ENCODE measurements at regions of chr5 and their contacts with region 1.

Region 1: GRCh38 chr5:67493676-67494075 is 297.1 kb upstream of the CD180 start:
- DNase-seq: peak in 1 of 5 donors; percentile 14
- H3K4me3 ChIP-seq: no peak overlapping the region
- H3K27ac ChIP-seq: no peak overlapping the region
- H3K4me1 ChIP-seq: peaks cover 2% of the 10 kb centered on the region
- H3K27me3 ChIP-seq: no peaks in the 10 kb centered on the region
- CTCF ChIP-seq: no peak
- EP300 ChIP-seq: no peak
- POLR2A ChIP-seq: no peak

Region 2: DNA sequence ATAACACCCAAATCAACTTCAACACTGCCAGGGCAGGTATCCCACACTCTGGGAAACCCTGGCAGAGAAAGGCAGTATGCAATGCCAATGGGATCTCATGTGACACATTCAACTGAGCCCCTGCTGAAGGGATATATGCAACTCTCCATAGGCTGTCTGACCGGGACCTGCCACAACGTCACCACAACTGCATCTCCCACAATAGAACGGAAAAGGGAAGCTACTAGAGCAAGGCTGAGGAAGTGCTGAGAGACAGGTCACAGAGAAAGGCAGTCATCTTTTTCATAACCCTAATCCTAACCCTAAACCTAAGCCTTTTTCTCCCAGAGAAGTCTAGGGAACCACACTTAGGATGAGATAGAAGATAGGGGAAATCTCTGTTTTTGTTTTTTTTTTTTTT is 48.8 kb after region 1 on chr5:
- intact Hi-C with region 1: no loop called
- DNase-seq: no peak
- H3K4me3 ChIP-seq: no peak overlapping the region
- H3K27ac ChIP-seq: no peak overlapping the region
- H3K4me1 ChIP-seq: peaks cover 1% of the 10 kb centered on the region
- H3K27me3 ChIP-seq: no peaks in the 10 kb centered on the region
- CTCF ChIP-seq: no peak
- EP300 ChIP-seq: no peak
- POLR2A ChIP-seq: no peak

Region 3: DNA sequence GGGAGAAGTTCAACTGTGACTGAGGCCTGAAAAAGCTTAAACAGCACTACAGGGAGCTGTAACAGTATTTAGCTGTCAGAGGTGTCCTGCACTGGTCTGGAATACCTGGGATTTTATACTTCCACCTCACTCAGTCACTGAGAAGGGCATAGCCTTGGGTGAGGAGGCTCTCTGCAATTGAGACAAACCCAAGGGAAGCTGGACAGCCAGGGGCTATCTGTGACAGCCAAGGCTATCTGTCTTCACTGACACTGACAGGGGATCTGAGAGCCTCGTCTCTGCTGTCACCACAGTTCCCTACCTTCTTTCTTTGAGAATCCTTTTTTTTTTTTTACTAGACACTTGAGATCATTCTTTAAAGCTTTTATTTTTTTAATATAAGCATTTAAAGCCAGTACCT is 59.1 kb after region 1 on chr5:
- intact Hi-C with region 1: loop called in 1 of 4 experiments (anchors 10 kb)
- DNase-seq: no peak
- H3K4me3 ChIP-seq: no peak overlapping the region
- H3K27ac ChIP-seq: no peak overlapping the region
- H3K4me1 ChIP-seq: no peaks in the 10 kb centered on the region
- H3K27me3 ChIP-seq: no peaks in the 10 kb centered on the region
- CTCF ChIP-seq: no peak
- EP300 ChIP-seq: no peak
- POLR2A ChIP-seq: no peak